ENCODE measurements at regions of chr1 and their contacts with region 1.

Region 1: GRCh38 chr1:54488779-54489626 is 59.0 kb upstream of the ACOT11 start:
- DNase-seq: peak; percentile 67
- H3K4me3 Mint-ChIP-seq: peak overlapping the region; percentile 76
- H3K27ac Mint-ChIP-seq: peak overlapping the region; percentile 78
- H3K4me1 Mint-ChIP-seq: peaks cover 42% of the 10 kb centered on the region
- H3K27me3 Mint-ChIP-seq: peaks cover 18% of the 10 kb centered on the region

Region 2: DNA sequence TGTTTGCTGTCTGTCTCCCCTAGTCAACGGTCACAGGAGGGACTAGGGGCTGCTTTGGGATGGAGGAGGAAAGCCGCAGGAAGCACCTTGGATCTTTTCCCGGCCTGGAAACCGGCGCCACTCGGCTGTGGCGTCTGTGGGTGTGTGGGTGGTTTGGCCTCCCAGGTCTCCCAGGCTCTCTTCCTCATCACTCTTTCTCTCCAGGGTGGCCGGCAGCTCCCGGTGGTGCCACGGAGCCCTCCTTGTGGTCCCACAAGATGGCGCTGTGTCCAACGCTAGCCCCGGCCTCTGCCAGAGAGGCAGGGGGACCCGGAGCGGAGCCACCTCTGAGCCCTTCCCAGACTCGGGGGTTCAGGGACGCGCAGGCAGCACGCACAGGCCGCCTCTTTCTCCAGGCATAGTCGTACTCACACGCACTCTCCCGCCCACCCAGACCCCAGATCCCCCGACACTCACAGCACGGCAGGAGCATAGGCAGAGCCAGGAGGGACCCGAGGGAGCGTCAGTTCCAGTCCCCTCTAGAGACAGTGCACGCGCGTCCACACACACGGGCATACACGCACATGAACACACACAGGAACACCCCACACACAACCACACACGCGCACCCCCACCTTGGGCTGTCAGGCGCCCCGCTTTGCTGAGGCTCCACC is 367.4 kb before region 1 on chr1:
- CTCF ChIA-PET with region 1: interaction called, 11 read pairs
- POLR2A ChIA-PET with region 1: no interaction called
- DNase-seq: peak; percentile 67
- H3K4me3 Mint-ChIP-seq: no peak overlapping the region
- H3K27ac Mint-ChIP-seq: no peak overlapping the region
- H3K4me1 Mint-ChIP-seq: peaks cover 9% of the 10 kb centered on the region
- H3K27me3 Mint-ChIP-seq: peaks cover 6% of the 10 kb centered on the region

Region 3: GRCh38 chr1:54406339-54407153 is 82.5 kb before region 1 on chr1 and contains the start of gene SSBP3:
- CTCF ChIA-PET with region 1: interaction called, 11 read pairs
- POLR2A ChIA-PET with region 1: no interaction called
- DNase-seq: peak; percentile 91
- H3K4me3 Mint-ChIP-seq: peak within 1 kb of the TSS; percentile 93
- H3K27ac Mint-ChIP-seq: peak within 1 kb of the TSS; percentile 90
- H3K4me1 Mint-ChIP-seq: peaks cover 67% of the 10 kb centered on the region
- H3K27me3 Mint-ChIP-seq: no peaks in the 10 kb centered on the region
- total RNA-seq, gene SSBP3: 93.4 to 127 TPM

Region 4: DNA sequence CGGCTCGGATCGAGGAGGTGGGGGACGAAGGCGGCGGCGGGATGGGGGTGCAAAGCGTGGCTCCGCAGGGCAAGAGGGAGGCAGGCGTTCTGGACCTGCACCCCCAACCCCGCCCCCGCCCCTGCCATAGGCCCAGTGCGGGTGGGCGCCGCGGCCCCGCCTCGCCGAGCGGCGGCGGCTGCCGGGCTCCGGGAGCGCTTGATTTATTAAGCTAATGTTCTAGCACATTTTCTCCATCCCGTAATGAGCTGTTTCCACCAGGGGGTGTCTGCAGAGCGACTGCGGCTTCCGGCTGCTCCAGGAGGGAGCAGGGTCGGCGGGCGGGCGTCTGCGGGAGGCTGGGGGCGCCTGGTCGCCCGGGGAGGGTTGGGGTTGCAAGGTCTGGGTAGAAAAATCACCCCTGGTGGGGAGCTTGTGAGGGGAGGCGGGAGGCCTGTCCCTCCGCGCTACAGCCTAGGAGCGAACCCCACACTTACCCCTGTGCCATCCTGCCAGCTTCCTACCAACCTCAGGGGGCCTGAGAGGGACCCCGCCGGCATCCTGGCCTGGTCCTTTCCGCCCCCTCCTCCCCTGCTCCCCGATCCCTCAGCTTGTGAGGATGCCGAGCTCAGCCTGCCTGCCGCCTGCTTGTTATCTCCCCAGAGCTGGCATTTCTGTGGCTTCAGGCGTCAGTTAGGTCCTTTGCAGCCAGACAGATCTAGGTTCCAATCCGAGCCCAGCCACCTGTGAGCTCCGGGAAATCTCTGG is 10.5 kb after region 1 on chr1:
- CTCF ChIA-PET with region 1: interaction called, 16 read pairs
- POLR2A ChIA-PET with region 1: no interaction called
- DNase-seq: peak; percentile 63
- H3K4me3 Mint-ChIP-seq: peak overlapping the region; percentile 43
- H3K27ac Mint-ChIP-seq: no peak overlapping the region
- H3K4me1 Mint-ChIP-seq: peaks cover 10% of the 10 kb centered on the region
- H3K27me3 Mint-ChIP-seq: peaks cover 45% of the 10 kb centered on the region

Measured in activated CD4-positive, alpha-beta T cell treated with anti-CD3 and anti-CD28 coated beads, Interleukin-2, amount 10 ng/mL, durations not matched to agents 7 days and 5 days (primary cell).